Cardiac septum (tissue), 1 donor: ENCODE measurements at regions of chr1 and their contacts with region 1.

Region 1: DNA sequence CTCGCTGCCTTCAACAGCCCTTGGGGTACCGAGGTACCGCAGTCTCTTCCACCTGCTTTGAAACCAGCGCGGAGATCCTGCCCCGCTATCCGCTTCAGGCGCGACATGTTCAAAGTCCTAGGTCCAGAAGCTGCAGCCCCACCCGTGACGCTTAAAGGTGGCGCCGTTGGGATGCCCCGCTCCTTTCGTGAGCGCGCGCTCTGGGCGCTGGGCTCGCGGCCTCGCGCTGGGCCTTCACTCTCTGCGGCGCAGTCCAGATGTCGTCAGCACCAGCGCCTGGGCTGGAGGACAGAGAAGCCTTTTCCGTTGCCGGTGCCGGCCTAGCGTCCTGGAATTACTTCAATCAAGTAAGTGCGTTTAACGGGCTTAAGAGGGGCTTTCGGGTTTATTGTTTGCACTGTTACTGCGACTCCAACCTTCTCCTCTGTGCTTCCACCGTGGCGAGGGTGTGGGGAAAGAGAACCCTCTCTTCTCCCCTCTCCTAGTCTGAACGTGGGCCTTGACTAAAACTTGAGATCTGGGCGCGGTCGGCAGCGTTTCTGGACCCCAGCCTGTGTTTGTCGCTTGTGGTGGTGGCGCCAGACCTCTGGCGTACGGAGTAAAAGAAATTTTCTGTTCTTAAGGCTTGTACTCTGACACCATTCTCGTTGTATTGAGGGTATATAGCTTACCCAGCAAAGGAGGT is at the start of gene LRRC40:
- DNase-seq: peak; percentile 99
- total RNA-seq, gene LRRC40: 10.6 TPM

Region 2: GRCh38 chr1:70195342-70195741 is 10.2 kb before region 1 on chr1:
- intact Hi-C with region 1: no loop called
- DNase-seq: no peak

Region 3: DNA sequence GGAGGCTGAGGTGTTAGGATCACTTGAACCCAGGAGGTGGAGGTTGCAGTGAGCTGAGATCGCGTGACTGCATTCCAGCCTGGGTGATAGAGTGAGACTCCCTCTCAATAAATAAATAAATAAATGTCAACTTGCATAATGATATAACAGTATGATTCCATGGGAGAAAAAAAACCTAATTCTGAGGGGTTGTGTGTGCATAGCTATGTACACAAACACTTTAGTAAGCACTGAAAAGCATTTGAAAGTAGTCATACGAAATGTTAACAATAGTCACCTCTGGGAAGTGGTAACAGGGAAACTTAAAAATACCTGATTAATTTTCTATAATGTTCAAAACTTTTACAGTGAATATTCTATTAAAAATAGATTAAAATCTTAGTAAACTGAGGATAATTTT is 105.8 kb after region 1 on chr1:
- intact Hi-C with region 1: no loop called
- DNase-seq: no peak

Region 4: GRCh38 chr1:70587872-70588366 is 382.3 kb after region 1 on chr1:
- intact Hi-C with region 1: no loop called
- DNase-seq: no peak

Region 5: DNA sequence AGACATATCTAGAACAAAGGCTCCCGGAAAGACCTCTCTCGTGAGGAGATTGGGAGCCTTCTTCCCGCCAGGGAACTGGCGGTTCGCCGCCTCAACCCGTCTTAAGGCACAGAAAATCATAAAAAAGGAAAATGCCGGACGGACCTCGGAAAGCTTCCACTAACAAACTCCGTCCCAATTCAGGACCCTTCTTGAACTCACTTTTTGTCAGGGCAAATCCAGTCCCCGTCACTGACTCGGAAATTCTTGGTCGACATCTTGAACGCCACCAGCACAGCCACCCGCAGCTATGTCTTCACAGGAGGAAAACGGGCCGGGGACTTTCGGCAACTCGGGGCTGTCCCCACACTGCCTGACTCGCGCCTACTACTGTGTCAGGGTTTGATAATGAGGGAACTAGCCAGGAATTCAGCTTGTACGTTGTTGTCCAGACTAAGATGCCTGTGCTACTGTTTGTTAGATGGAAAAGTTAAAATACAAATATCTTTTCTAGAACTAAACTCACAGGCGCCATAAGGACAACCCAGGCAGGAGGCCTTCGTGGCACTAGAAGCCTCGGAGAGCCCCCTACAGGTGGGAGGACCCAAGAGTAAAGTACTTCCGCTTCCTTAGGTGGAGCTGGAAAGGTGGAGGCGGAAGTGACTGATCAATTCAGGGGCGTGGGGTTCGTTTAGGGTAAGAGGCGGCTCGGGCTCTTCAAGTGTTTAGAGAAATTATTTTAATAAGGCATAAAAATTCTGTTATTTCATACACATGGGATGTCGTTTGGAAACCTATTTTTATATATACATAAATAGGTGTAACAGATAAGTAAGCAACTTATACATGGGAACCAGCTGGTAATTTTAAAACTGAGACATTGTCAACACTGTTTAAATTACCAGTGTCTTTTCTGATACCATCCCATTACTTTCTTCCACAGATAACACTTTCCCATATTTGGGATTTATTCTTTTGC is 875.4 kb after region 1 on chr1 and contains the start of gene ZRANB2:
- intact Hi-C with region 1: loop called (anchors 5 kb)
- DNase-seq: peak; percentile 93
- total RNA-seq, gene ZRANB2: 51.2 TPM